Gastrocnemius medialis (tissue), 4 donors: ENCODE measurements at regions of chr22 and their contacts with region 1.

Region 1: DNA sequence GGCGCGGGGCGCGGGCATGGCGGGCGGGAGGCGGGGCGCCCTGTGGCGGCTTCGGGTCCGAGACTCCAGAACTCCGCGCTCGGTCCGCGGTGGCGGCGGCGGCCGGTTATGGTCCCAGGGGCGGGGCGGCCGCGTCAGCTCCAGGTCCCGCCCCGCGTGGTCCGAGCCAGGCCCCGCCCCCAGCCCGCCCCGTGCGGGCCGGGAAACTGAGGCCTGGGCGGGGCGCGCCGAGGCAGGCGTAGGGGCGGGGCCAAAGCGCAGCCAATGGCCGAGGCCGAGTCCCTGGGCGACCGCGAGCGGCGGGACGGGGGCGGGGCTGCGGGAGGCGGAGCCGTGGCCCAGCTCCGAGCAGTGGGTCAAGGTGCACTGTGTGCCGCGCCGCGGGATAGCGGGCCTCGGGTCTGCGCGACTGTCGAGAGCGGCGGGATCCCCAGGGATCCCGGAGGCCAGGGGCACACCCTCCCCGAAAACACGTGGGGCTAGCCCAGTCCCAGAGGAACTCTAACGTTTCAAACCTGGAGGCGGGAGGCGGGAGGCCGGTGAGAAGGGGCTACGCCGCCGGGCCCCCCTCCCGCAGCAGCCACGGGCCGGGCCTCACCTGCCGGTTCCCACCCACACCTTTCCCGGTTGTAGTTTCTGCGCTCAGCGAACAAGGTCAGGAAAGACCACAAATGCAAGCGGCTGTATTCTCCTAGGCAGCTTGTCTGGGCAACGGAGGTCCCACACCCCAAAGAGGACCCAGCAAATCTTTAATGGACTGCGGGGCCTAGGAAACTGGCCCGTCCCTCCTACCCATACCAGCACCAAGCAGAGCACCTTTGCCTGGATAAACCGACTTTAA is at the start of gene SLC25A1:
- DNase-seq: peak; percentile 78 to 87
- ATAC-seq: peak; percentile 67 to 78
- H3K4me3 ChIP-seq: peak within 1 kb of the TSS; percentile 58 to 76 (median 70)
- H3K27ac ChIP-seq: peak within 1 kb of the TSS; percentile 76 to 97 (median 93)
- H3K4me1 ChIP-seq: peaks cover 18 to 28% of the 10 kb centered on the region in 2 donors
- H3K27me3 ChIP-seq: no peaks in the 10 kb centered on the region
- CTCF ChIP-seq: no peak
- POLR2A ChIP-seq: peak; percentile 49 to 57
- total RNA-seq, gene SLC25A1: 10.5 to 16.6 (median 13.5) TPM

Region 2: DNA sequence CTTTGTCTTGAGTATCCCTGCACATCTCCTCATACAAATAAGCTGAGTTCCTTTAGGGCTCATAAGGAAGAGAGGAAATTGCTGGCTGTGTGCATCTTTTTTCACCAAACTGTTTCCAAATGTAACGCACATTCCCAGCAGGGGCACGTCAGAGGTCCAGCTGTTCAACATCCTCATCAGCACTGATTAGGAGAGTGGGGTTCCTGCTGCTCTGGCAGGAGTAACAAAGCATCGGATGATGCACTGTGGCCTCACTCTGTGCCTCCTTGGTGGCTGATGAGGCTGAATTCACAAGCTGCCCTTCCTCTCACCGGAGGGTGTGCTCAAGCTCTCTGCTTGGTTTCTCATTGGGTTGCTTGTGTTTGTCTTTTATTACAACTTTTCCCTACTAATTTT is 35.2 kb after region 1 on chr22:
- in situ Hi-C with region 1: no loop called
- intact Hi-C with region 1: loop called (anchors 5 kb)
- DNase-seq: no peak
- ATAC-seq: no peak
- H3K4me3 ChIP-seq: no peak overlapping the region
- H3K27ac ChIP-seq: peak overlapping the region in 3 of 4 donors; percentile 83 to 90 (median 90)
- H3K4me1 ChIP-seq: peaks cover 26 to 43% of the 10 kb centered on the region in 2 donors
- H3K27me3 ChIP-seq: no peaks in the 10 kb centered on the region
- CTCF ChIP-seq: no peak
- POLR2A ChIP-seq: no peak

Region 3: DNA sequence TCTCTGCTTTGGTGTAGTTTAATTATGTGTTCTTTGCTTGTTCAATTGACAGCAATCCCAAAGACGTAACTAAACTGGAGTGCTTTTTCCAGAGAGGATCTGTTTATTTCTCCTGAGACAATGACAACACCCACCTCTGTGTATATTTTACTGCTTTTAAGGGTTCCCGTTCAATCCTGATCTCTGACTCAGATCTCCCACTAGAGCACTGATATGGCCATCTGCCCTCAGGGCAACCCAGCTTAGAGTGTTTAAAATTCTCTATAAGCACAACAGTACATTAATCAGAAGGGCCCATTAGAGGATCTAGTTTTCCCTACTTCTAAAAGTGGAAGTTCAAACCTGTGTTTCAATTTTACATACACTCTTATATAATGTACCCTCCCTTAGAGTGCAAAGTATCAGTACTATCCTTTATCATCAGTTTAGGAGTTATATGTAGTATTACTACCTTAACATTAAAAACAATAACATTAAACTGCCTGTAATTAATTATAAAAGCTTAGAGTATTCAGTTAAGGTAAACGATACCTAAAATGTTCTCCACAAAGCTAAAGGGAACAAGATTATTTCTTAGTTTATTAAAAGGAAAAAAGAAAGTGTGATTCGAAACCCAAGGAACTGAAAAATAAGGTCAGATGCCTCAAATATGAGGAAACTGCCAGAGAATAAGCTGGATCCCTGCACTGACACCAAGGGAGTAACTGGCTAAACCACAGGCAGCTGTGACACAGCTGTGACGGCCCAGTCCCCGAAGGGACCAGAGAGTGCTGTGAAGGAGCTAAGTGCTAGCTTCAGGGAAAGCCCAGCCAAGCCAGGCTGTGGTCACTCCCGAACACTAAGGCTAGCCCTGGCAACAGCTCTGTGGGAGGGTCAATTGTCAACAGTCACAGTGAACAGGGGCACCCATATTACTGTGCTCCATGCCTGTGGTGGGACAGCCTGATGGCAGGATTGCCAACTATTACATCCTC is 284.9 kb after region 1 on chr22:
- in situ Hi-C with region 1: loop called in 1 of 4 experiments (anchors 25 kb)
- intact Hi-C with region 1: no loop called
- DNase-seq: peak in 1 of 2 donors; percentile 66
- ATAC-seq: peak in 1 of 2 donors; percentile 63
- H3K4me3 ChIP-seq: no peak overlapping the region
- H3K27ac ChIP-seq: peak overlapping the region in 3 of 4 donors; percentile 3 to 16 (median 7)
- H3K4me1 ChIP-seq: no peaks in the 10 kb centered on the region
- H3K27me3 ChIP-seq: no peaks in the 10 kb centered on the region
- CTCF ChIP-seq: no peak
- POLR2A ChIP-seq: no peak